ENCODE measurements at regions of chr4 and their contacts with region 1.

Region 1: DNA sequence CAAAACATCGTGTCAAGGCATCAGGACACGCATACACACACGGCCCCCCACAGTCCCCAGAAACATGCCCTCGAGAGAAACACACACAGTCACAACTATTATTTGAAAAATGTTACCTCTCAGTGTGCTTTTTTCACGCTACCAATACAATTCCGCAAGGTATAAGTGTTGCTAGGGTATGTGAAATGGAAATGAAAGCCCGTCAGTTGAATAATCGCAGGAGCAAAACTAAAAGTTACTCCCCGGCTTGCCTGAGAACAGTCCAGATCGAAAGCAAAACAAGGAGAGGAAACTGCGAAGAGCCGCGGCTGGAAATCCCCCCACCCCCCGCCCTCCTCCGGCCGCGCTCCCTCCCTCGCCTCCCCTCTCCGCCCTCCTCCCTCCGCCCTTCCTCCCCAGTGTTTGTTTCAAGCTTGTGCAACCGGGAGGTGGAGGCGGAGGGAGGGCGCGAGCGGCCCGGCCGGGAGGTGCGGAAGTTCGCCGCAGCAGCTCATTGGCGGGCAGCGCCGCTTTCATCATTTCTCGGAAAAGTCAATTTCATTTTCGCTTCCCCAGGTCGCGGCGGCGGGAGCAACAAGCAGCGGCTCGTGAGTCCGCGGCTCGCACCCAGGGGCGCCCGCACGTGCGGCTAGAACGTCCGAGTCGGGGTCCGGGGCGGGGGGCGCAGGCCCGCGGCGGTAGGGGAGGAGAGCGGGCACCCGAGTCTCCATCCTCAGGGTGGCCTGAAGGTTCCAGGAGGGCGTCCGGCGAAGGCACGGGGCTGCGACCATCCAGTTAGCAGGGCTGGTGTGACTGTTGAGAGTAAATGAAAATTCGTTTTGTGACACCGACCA is at the start of gene IRF2:
- DNase-seq: peak; percentile 86
- ATAC-seq: peak; percentile 80
- H3K4me3 Mint-ChIP-seq: peak within 1 kb of the TSS; percentile 94
- H3K27ac Mint-ChIP-seq: peak within 1 kb of the TSS; percentile 96
- H3K4me1 Mint-ChIP-seq: peaks cover 63% of the 10 kb centered on the region
- H3K27me3 Mint-ChIP-seq: no peaks in the 10 kb centered on the region
- CTCF ChIP-seq: no peak
- total RNA-seq, gene IRF2: 65.5 and 66.2 TPM in 2 replicates

Region 2: DNA sequence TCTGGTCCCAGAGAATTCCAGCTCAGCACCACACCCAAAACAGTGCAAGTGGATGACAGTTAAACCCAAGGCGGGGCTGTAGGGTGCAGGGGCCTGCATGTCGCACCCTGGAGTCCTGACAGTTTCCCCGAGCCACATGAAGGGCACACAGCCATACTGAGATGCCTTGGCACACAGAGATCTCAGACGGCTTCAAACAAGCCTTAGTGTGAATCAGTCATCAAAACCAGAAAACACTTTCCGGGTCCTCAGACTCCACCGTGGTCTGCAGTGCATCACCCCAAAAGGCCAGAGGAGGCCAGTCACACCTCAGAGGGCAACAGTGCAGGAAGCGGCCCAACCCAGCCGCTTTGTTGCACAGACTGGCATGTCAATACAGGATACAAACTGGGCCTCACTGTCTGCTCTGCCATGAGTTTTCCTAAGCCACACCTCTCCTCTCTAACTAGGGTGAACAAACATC is 192.2 kb before region 1 on chr4:
- CTCF ChIA-PET with region 1: no interaction called
- POLR2A ChIA-PET with region 1: interaction called, 29 read pairs
- intact Hi-C with region 1: loop called (anchors 1 kb)
- DNase-seq: no peak
- ATAC-seq: peak; percentile 40
- H3K4me3 Mint-ChIP-seq: peak overlapping the region; percentile 32
- H3K27ac Mint-ChIP-seq: peak overlapping the region; percentile 83
- H3K4me1 Mint-ChIP-seq: peaks cover 66% of the 10 kb centered on the region
- H3K27me3 Mint-ChIP-seq: no peaks in the 10 kb centered on the region
- CTCF ChIP-seq: no peak

Region 3: DNA sequence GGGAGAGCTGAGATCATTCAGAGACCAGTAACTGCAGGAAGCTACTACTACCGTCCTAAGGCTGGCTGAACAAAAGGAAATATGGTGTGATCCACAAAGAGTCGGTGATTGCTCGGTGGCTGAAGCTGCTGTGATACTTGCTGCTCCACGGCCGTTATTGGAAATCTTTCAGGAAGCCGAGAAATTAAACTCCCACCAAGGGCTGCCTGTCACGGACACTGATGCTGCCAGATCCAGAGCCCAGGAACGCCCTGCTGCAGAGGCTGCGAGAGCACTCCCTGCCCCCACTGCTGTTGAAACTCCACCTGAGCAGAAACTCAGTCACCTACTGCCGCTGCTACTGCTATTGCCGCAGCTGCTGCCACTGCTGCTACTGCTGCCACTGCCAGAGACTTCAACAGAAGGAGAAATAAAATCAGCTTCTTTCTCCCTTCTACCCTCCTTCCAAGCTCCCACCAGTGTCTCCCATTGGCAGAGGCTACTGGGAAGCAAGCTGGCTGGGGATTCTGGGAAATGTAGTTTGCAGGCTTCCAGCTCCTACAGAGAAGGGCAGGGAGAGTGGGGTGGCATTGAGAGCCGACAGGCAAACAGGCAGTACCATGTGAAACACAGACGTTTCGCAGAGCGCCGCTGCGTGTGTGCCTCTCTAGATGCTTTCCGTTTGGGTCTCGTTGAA is 130.8 kb before region 1 on chr4:
- CTCF ChIA-PET with region 1: interaction called, 4 read pairs
- POLR2A ChIA-PET with region 1: interaction called, 25 read pairs
- intact Hi-C with region 1: no loop called
- DNase-seq: peak; percentile 39
- ATAC-seq: peak; percentile 50
- H3K4me3 Mint-ChIP-seq: peak overlapping the region; percentile 86
- H3K27ac Mint-ChIP-seq: peak overlapping the region; percentile 83
- H3K4me1 Mint-ChIP-seq: peaks cover 73% of the 10 kb centered on the region
- H3K27me3 Mint-ChIP-seq: no peaks in the 10 kb centered on the region
- CTCF ChIP-seq: no peak

Region 4: GRCh38 chr4:184437565-184438265 is 36.8 kb before region 1 on chr4:
- CTCF ChIA-PET with region 1: no interaction called
- POLR2A ChIA-PET with region 1: interaction called, 6 read pairs
- intact Hi-C with region 1: loop called (anchors 1 kb)
- DNase-seq: no peak
- ATAC-seq: peak; percentile 79
- H3K4me3 Mint-ChIP-seq: no peak overlapping the region
- H3K27ac Mint-ChIP-seq: peak overlapping the region; percentile 72
- H3K4me1 Mint-ChIP-seq: peaks cover 73% of the 10 kb centered on the region
- H3K27me3 Mint-ChIP-seq: no peaks in the 10 kb centered on the region
- CTCF ChIP-seq: no peak

Region 5: DNA sequence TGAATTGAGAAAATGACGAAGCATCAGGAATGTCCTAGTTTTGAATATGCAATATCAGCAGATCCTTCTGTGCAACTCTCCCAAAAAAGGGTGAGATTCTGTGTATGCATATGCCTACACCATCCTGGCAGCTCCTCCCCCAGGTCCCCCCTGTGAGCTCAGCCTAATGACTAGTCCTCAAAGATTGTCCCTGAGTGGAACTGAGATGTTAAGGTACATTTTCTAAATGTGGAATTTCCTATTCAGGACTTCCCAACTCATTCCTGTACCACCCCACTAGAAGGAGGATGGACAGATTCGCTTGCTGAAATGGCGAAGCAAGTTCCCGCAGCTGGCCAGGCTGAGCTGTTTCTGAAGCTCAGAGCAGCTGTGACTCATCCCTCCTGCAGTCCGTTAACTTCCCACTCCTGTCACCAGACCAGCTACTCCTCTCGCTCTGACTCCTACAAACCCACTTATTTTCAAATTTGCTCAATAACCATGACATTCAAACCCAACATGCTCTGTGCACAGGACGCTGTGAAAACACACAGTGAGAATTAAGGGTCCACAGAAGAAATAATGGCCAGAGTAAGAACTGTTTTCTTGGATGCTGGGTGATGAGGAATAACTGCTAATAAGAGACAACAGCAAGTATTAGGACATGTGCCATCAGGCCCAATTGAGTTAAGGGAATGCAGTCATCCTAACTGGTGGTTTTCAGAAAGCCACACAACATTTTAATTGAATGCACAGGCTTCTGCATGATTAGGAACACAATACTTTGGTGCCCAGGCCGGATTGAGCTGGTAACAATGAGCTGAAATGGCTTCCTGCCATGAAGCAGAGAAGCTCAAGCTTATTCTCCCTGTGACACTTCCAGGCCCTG is 39.9 kb after region 1 on chr4:
- CTCF ChIA-PET with region 1: interaction called, 7 read pairs
- POLR2A ChIA-PET with region 1: interaction called, 41 read pairs
- intact Hi-C with region 1: loop called (anchors 1 kb)
- DNase-seq: no peak
- ATAC-seq: peak; percentile 90
- H3K4me3 Mint-ChIP-seq: peak overlapping the region; percentile 32
- H3K27ac Mint-ChIP-seq: peak overlapping the region; percentile 54
- H3K4me1 Mint-ChIP-seq: peaks cover 31% of the 10 kb centered on the region
- H3K27me3 Mint-ChIP-seq: no peaks in the 10 kb centered on the region
- CTCF ChIP-seq: no peak

Region 6: DNA sequence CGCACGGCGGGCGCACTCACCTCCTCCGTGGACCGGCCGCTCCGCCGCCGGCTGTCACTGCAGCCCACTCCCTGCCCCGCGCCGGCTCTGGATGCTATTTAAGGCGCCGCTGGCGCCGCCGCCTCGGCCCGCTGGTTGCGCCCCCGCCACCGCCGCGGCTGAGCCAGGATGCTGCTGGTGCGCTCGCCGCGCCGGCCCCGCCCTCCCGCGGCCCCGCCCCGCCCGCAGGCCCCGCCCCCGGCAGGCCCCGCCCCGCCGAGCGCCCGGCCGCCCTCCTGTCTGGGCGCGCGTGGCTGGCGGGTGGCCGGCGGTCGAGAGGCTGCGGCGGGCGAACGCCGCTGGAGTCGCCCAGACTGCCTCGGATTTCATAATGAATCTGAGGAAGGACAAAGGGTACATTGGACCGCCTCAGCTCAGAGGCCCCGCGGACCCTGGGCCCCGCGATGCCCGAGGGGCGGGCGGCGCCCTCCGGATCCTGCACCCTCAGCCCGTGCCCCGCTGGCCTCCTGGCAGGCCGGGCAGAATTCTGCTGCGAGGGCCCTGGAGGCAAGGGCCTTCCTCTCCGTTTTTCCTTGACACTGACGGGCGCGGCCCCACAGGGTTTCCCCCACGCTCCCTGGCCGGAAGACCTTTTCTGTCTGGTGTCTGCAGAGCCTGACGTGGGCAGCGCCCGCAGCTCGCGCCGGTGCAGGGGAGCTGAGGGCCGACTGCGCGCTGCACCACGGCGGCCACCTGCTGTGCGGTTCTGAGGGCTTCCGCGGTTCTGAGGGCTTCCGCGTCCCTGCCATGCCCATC is 351.6 kb after region 1 on chr4 and contains the start of gene ACSL1:
- CTCF ChIA-PET with region 1: no interaction called
- POLR2A ChIA-PET with region 1: no interaction called
- intact Hi-C with region 1: loop called (anchors 10 kb)
- DNase-seq: peak; percentile 77
- ATAC-seq: peak; percentile 78
- H3K4me3 Mint-ChIP-seq: peak within 1 kb of the TSS; percentile 94
- H3K27ac Mint-ChIP-seq: peak within 1 kb of the TSS; percentile 91
- H3K4me1 Mint-ChIP-seq: peaks cover 42% of the 10 kb centered on the region
- H3K27me3 Mint-ChIP-seq: no peaks in the 10 kb centered on the region
- CTCF ChIP-seq: no peak
- total RNA-seq, gene ACSL1: 46.3 and 47.0 TPM in 2 replicates

Measured in activated B cell treated with CpG ODN at 0.5 μM for 24 hours (primary cell).